ENCODE measurements at regions of chr21 and their contacts with region 1.

Region 1: DNA sequence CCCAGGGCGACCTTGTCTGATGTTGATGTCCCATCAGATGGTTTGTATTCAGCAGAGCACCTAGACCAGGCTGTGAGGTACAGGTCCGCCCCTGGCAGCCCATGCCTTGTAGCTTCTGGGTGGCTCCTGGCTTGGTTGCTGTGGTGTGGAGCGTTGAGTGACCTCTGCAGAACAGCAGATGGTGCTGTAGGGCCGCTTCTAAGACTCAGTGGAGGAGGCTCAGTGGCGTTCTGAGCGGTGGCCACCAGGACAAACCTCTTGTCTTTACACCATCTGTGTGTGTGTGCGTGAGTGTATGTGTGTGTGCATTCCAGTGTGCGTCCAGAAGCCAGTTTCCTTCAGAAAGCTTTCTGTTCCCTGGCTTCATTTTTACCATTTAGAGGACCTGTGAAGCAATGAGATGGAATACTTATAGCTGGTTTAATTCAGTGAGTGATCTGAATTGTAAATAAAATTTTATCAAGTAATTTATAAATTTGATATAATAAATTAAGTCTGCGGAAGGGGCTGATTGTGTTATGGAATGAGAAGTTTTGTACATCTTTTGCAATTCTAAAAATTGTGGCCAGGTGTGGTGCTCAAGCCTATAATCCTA is 66.1 kb downstream of the ADARB1 start:
- DNase-seq: peak; percentile 90
- H3K4me3 ChIP-seq: no peak overlapping the region; a peak in 1 of 4 replicates
- H3K27ac ChIP-seq: no peak overlapping the region
- H3K4me1 ChIP-seq: peaks cover 6 to 9% of the 10 kb centered on the region in 2 experiments; a peak in 3 of 4 replicates
- H3K27me3 ChIP-seq: no peaks in the 10 kb centered on the region
- CTCF ChIP-seq: peak; percentile 91
- EP300 ChIP-seq: no peak
- RAD21 ChIP-seq: peak; percentile 99

Region 2: GRCh38 chr21:44886113-44887075 is 254.0 kb before region 1 on chr21:
- CTCF ChIA-PET with region 1: no interaction called
- POLR2A ChIA-PET with region 1: no interaction called
- DNase-seq: no peak
- H3K4me3 ChIP-seq: no peak overlapping the region
- H3K27ac ChIP-seq: no peak overlapping the region
- H3K4me1 ChIP-seq: peaks cover 5% of the 10 kb centered on the region in 2 experiments; a peak in 2 of 4 replicates
- H3K27me3 ChIP-seq: no peaks in the 10 kb centered on the region; the same call in 1 of the 2 replicates
- CTCF ChIP-seq: no peak
- EP300 ChIP-seq: no peak
- RAD21 ChIP-seq: no peak

Region 3: DNA sequence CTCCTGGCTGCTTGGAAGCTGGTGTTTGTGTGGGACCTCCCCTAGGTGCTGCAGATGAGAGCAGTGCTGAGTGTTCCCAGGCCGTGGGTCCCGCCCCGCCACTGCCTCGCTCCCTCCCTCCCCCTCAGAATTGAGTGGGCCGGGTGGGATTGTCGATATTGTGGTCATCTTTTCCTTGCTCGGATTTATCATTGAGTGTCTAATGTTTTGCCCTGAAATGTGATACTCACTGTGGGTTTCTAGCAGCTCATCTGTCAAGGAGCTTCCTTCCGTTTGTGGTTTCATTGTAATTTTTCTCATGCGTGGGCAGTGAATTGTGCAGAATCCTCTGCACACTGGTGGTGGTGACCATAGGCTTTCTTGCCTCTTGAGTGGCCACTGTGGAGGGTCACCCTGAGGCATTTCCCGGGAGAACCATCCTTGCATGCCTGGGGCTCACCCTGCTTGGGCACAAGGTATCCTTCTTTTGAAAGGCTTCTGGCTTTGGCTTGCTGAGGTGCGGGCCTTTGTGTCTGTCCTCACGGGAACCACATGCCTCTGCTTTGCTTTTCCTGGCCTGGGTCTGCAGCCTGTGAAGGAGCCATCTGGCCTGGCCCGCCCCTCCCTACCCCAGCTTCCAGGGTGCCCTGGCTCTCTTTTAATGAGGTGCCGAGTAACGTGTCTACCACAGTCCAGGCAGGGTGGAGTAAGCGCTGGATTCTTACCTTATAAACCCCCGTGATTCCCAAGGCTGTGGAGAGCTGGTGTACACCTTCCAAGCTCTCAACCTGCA is 175.0 kb before region 1 on chr21:
- CTCF ChIA-PET with region 1: interaction called, 22 read pairs
- POLR2A ChIA-PET with region 1: no interaction called
- DNase-seq: no peak
- H3K4me3 ChIP-seq: no peak overlapping the region
- H3K27ac ChIP-seq: peak overlapping the region in 1 of 2 experiments; percentile 73; a peak in 2 of 4 replicates
- H3K4me1 ChIP-seq: peaks cover 22 to 28% of the 10 kb centered on the region in 2 experiments; a peak in 3 of 4 replicates
- H3K27me3 ChIP-seq: no peaks in the 10 kb centered on the region
- CTCF ChIP-seq: no peak
- EP300 ChIP-seq: no peak
- RAD21 ChIP-seq: no peak

Region 4: GRCh38 chr21:45114072-45114471 is 26.4 kb before region 1 on chr21:
- CTCF ChIA-PET with region 1: interaction called, 80 read pairs
- POLR2A ChIA-PET with region 1: no interaction called
- DNase-seq: no peak
- H3K4me3 ChIP-seq: no peak overlapping the region
- H3K27ac ChIP-seq: no peak overlapping the region
- H3K4me1 ChIP-seq: peaks cover 0 to 15% of the 10 kb centered on the region in 2 experiments; a peak in 1 of 4 replicates
- H3K27me3 ChIP-seq: no peaks in the 10 kb centered on the region
- CTCF ChIP-seq: no peak
- EP300 ChIP-seq: no peak
- RAD21 ChIP-seq: no peak

Region 5: DNA sequence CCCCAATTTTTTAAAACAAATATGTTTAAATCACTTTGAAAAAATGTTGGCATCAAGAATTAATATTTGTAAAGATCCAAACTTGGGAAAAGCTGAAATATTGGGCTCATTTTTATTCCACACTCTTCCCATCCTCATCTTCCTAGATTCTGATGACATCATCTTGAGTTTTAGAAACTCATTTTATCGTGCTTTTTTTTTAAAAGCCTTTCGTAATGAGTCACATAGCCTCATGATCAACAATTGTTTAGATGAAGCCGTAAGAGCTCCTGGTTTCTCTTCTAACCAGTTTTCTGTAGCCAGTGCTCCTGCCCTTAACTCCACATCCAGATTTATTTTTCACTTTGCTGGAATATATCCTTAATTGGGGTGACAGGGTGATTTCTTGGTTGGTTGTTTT is 68.6 kb after region 1 on chr21:
- CTCF ChIA-PET with region 1: interaction called, 117 read pairs
- POLR2A ChIA-PET with region 1: no interaction called
- DNase-seq: no peak
- H3K4me3 ChIP-seq: no peak overlapping the region
- H3K27ac ChIP-seq: no peak overlapping the region
- H3K4me1 ChIP-seq: peaks cover 0 to 11% of the 10 kb centered on the region in 2 experiments; a peak in 1 of 4 replicates
- H3K27me3 ChIP-seq: no peaks in the 10 kb centered on the region
- CTCF ChIP-seq: no peak
- EP300 ChIP-seq: no peak
- RAD21 ChIP-seq: no peak

Region 6: DNA sequence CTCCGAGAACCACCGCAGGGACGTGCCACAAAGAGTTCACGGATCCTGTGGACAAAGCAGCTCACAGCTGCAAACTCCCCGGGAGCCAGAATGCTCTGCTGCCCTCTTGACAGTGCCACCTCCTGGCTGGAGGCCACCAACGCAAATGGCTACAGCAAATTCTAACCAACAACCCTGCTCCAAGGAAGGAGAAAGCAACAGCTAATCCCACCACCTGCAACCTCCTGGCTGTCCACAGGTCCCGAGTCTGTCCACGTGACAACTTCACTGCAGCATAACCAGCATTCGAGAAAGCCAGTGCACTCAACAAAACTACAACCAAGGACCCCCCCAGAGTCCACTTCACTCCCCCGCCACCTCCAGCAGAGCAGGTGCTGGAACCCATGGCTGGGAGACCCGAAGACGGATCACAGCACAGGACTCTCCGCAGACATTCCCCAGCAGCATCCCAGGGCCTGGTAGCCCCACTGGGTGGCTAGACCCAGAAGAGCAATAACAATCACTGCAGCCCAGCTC is 129.9 kb after region 1 on chr21:
- CTCF ChIA-PET with region 1: interaction called, 20 read pairs
- POLR2A ChIA-PET with region 1: no interaction called
- DNase-seq: no peak
- H3K4me3 ChIP-seq: no peak overlapping the region
- H3K27ac ChIP-seq: no peak overlapping the region
- H3K4me1 ChIP-seq: no peaks in the 10 kb centered on the region
- H3K27me3 ChIP-seq: no peaks in the 10 kb centered on the region
- CTCF ChIP-seq: peak; percentile 31
- EP300 ChIP-seq: no peak
- RAD21 ChIP-seq: no peak

Region 7: DNA sequence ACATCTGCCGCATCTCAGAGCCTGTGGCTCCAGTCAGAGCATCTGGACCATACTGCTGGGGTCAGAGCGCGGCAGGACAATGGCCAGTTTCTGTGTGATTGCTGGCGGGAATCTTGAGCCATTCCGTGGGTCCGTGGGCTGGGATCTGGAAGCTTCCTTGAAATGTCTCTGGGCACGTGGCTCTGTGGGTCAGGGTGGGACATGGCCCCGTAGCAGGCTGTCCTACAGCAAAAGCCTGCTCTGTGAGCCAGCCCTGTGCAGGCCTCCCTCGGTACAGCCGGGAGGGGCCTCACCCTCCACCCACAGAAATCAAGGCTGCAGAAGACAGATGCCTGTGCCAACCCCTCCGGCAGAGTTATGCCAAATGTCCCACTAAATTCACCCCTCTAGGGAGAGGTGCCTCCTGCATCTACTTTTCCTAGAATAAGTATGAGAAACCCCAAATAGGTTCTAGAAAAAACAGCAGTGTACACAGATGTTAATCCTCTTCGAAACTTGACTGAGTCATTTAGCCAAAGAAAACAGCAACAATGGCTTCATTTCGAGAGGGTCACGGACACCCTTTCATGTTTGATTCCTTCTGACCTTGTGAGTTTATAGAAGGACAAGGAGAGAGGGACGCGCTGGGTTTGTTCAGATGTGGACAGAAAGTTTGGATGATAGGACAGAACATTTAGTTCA is 292.3 kb after region 1 on chr21:
- CTCF ChIA-PET with region 1: interaction called, 54 read pairs
- POLR2A ChIA-PET with region 1: no interaction called
- DNase-seq: no peak
- H3K4me3 ChIP-seq: no peak overlapping the region
- H3K27ac ChIP-seq: no peak overlapping the region; a peak in 1 of 4 replicates
- H3K4me1 ChIP-seq: peaks cover 16 to 20% of the 10 kb centered on the region in 2 experiments; a peak in 2 of 4 replicates
- H3K27me3 ChIP-seq: no peaks in the 10 kb centered on the region
- CTCF ChIP-seq: no peak
- EP300 ChIP-seq: no peak
- RAD21 ChIP-seq: no peak

Region 8: DNA sequence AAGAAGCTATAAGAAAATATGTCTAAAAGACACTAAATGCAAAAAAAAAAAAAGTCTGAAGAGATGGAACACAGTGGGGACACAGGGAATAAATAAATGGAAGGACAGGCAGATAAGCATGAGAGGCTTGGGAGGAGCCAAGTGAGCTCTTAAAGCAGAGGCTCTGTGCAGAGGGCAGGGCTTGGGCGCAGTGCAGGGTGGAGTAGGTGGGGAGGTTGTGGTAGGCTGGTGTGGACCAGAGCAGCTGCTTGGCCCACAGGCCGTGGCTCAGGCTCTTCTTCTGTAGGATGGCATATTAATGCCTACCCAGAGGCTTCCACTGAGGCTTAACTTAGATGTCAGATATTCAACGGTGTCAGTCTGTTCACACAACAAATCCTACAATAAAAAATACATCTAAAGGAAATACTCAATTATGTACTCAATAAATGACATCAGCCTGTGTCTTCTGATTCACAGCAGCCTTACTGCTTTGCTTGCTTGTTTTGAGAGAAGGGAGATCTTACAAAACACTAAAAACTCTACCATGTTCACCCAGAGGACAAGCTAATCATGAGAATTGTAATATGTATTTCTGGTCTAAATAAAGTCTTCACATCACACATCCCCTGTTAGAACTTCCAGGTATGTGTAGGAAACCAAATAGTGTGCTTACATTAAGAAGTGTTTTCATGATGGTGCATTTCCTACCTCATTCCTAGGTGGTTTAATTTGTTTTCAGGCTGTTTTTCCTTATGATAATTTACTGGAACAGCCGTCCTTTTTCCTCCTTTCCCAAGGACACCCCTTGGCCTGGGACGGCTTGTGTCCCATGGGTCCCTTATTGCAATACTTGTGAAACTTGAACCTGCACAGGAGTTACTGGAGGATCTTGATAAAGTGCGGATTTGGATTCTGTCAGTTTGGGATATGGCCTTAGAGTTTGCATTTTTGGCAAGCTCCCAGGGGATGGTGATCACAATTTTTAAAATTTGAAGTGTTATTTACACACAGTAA is 1343.2 kb after region 1 on chr21:
- CTCF ChIA-PET with region 1: no interaction called
- POLR2A ChIA-PET with region 1: no interaction called
- DNase-seq: no peak
- H3K4me3 ChIP-seq: no peak overlapping the region
- H3K27ac ChIP-seq: no peak overlapping the region
- H3K4me1 ChIP-seq: no peaks in the 10 kb centered on the region; a peak in 2 of 4 replicates
- H3K27me3 ChIP-seq: no peaks in the 10 kb centered on the region
- CTCF ChIP-seq: no peak
- EP300 ChIP-seq: no peak
- RAD21 ChIP-seq: no peak